MCF 10A (cell line): ENCODE measurements at regions of chr3 and their contacts with region 1.

Region 1: DNA sequence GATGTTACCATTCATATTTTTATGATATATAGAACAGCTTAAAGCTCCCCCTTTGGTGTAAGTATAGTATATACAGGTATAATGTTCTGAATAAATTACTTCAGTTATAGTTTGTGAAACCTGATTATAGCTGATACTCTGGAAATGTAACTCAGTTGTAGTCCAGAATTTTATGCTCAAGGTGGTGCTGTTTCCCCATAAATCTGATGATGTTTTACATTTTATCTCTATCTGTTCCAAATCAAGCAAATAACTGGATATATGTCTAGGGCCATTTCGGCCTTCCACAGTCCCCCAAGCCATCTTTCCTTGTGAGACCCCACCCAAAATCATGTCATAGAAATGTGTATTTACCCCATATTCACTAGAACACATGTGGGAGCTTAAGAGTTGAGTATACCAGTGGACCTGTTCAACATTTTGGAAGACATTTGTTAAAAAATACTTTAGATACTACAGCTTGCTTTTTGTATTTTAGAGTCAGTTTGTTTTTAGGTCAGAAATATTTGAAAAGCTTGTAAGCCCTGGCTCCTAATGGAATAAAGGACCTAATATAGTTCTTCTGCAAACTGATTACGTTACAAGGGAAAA is 107.1 kb downstream of the ATG7 start:
- DNase-seq: peak; percentile 59
- H3K4me3 Mint-ChIP-seq: no peak overlapping the region
- H3K27ac Mint-ChIP-seq: peak overlapping the region; percentile 79
- H3K4me1 Mint-ChIP-seq: peaks cover 17% of the 10 kb centered on the region
- H3K27me3 Mint-ChIP-seq: no peaks in the 10 kb centered on the region
- CTCF ChIP-seq: peak; percentile 72

Region 2: DNA sequence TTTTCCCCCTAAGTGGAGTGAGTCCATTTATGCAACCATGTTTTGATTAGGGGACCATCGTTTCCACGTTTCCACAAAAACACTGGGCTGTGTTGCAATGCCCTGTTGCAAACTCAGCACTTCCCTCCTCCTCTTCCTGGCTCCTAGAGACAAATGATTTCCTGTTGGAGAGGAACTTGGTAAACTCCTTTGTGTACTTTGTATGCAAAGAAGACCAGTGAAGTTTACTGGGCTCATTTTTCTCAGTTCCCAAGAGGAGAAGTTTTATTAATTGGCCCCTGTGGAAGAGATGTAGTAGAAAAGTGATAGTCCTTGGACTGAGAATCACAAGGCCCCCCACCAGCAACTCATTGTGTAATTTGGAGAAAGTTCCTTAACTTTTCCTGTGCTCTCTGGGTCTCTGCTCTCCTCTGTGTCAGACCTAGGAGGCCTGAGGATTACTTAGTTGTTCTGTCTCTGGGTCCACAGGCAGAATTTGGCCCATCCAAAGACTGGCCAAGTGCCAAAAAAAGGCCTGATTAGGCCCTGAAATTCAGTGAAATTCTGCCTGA is 12.1 kb before region 1 on chr3:
- CTCF ChIA-PET with region 1: interaction called, 11 read pairs
- POLR2A ChIA-PET with region 1: no interaction called
- intact Hi-C with region 1: no loop called
- DNase-seq: peak; percentile 52
- H3K4me3 Mint-ChIP-seq: no peak overlapping the region
- H3K27ac Mint-ChIP-seq: peak overlapping the region; percentile 35
- H3K4me1 Mint-ChIP-seq: peaks cover 8% of the 10 kb centered on the region
- H3K27me3 Mint-ChIP-seq: no peaks in the 10 kb centered on the region
- CTCF ChIP-seq: no peak

Region 3: GRCh38 chr3:11530153-11530721 is 150.9 kb after region 1 on chr3:
- CTCF ChIA-PET with region 1: interaction called, 9 read pairs
- POLR2A ChIA-PET with region 1: interaction called, 5 read pairs
- intact Hi-C with region 1: loop called (anchors 2 kb)
- DNase-seq: peak; percentile 90
- H3K4me3 Mint-ChIP-seq: no peak overlapping the region
- H3K27ac Mint-ChIP-seq: peak overlapping the region; percentile 31
- H3K4me1 Mint-ChIP-seq: peaks cover 25% of the 10 kb centered on the region
- H3K27me3 Mint-ChIP-seq: no peaks in the 10 kb centered on the region
- CTCF ChIP-seq: no peak

Region 4: GRCh38 chr3:11651900-11652299 is 272.6 kb after region 1 on chr3:
- CTCF ChIA-PET with region 1: interaction called, 20 read pairs
- POLR2A ChIA-PET with region 1: interaction called, 3 read pairs
- intact Hi-C with region 1: loop called (anchors 1 kb)
- DNase-seq: peak; percentile 36
- H3K4me3 Mint-ChIP-seq: no peak overlapping the region
- H3K27ac Mint-ChIP-seq: no peak overlapping the region
- H3K4me1 Mint-ChIP-seq: no peaks in the 10 kb centered on the region
- H3K27me3 Mint-ChIP-seq: no peaks in the 10 kb centered on the region
- CTCF ChIP-seq: peak; percentile 46

Region 5: GRCh38 chr3:11826628-11827265 is 447.4 kb after region 1 on chr3:
- CTCF ChIA-PET with region 1: interaction called, 10 read pairs
- POLR2A ChIA-PET with region 1: interaction called, 4 read pairs
- intact Hi-C with region 1: no loop called
- DNase-seq: no peak
- H3K4me3 Mint-ChIP-seq: no peak overlapping the region
- H3K27ac Mint-ChIP-seq: peak overlapping the region; percentile 13
- H3K4me1 Mint-ChIP-seq: no peaks in the 10 kb centered on the region
- H3K27me3 Mint-ChIP-seq: no peaks in the 10 kb centered on the region
- CTCF ChIP-seq: no peak